HAP-1 (cell line): ENCODE measurements at regions of chrX and their contacts with region 1.

Region 1: GRCh38 chrX:111869639-111870034 is 6.3 kb upstream of the TRPC5OS start:
- DNase-seq: peak; percentile 66 to 80
- H3K4me3 ChIP-seq: no peak overlapping the region
- H3K4me1 ChIP-seq: peaks cover 8% of the 10 kb centered on the region
- H3K27me3 ChIP-seq: no peaks in the 10 kb centered on the region

Region 2: DNA sequence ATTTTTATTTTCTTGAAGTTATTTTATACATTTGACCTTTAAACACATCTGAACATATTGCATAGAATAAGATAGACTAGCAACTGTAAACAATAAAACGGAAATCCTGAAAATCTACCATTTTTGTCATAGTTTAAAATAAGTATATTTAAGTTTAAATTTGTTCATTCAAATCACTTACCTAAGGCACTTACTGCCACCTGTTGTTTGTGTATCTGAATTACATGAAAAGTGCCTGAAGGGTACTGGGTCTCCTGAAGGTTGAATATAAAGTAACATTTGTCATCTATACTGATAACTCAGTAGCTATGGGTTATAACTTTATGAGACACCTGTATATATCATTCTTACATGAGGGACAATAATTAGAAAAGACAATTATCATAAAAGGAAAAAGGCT is 174.4 kb after region 1 on chrX:
- in situ Hi-C with region 1: loop called (anchors 25 kb)
- DNase-seq: peak in 1 of 2 experiments; percentile 28
- H3K4me3 ChIP-seq: no peak overlapping the region
- H3K4me1 ChIP-seq: no peaks in the 10 kb centered on the region
- H3K27me3 ChIP-seq: peaks cover 3% of the 10 kb centered on the region

Region 3: DNA sequence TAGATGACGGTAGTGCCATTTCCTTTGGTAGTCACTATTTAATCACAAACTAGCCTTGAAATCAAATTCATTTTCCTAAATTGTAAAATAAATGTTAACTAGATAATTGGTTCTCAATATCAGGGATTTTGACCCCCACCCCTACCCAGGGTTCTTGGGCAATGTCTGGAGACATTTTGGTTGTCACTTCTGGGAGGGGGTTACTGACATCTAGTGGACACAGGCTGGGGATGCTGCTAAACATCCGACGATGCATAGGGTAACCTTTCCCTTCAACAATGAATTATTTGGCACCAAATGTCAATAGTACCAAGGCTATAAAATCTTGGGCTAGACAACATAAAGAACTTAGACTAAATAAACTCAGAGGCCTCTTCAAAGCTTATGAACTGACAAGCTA is 498.7 kb after region 1 on chrX:
- in situ Hi-C with region 1: loop called (anchors 25 kb)
- DNase-seq: peak; percentile 38 to 50
- H3K4me3 ChIP-seq: no peak overlapping the region
- H3K4me1 ChIP-seq: 0 out of 2 replicates have a peak, but pooled peaks cover 3% of the 10 kb centered on the region
- H3K27me3 ChIP-seq: no peaks in the 10 kb centered on the region; the same call in 1 of the 2 replicates